ENCODE measurements at regions of chr17 and their contacts with region 1.

Region 1: GRCh38 chr17:7745748-7746470 is 28.4 kb downstream of the DNAH2 start:
- DNase-seq: peak; percentile 23
- H3K4me3 ChIP-seq: no peak overlapping the region
- CTCF ChIP-seq: no peak

Region 2: DNA sequence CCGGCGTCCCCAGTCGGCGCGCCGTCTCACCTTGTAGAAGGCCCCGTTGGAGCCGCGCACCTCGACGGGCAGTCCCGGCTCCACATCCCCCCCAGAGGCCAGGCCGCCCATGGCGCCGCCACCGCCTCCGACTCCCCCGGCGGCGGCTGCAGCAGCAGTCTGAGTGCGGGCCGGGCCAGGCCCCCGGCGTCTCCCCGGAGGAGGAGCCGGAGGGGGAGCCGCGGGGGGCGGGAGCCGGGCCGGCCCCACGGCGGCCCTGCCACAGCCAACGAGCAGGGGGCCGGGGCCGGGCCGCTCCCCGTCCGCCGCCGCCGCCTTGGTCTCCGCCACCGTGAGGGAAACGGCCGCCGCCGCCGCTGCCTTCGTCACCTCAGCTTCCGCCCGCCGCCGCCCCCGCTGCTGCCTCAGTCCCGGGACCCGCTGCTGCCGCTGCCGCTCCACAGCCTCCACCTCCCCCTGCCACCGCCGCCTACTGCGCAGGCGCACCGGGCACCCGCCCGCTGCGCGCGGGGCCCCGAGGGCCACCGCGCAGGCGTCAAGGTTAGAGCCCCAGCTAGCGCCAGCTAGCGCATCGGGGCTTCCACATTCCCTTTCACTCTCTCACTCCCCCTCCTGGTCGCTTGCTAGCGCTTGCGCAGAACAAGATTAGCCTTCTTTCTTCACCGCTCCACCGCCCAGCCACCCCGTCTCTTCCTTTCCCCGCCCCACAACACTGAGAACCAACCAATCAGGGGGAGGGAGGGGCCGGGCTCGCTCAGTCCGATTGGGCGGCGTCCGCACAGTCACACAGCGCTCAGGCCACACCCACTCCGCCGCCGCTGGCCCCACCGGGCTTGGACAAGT is 131.3 kb before region 1 on chr17 and contains the start of gene FXR2:
- CTCF ChIA-PET with region 1: no interaction called
- POLR2A ChIA-PET with region 1: no interaction called
- DNase-seq: peak; percentile 99
- H3K4me3 ChIP-seq: peak within 1 kb of the TSS; percentile 87
- CTCF ChIP-seq: peak; percentile 74

Region 3: GRCh38 chr17:7729816-7730215 is 16.1 kb before region 1 on chr17:
- CTCF ChIA-PET with region 1: interaction called, 19 read pairs
- POLR2A ChIA-PET with region 1: no interaction called
- DNase-seq: no peak
- H3K4me3 ChIP-seq: no peak overlapping the region
- CTCF ChIP-seq: no peak

Region 4: DNA sequence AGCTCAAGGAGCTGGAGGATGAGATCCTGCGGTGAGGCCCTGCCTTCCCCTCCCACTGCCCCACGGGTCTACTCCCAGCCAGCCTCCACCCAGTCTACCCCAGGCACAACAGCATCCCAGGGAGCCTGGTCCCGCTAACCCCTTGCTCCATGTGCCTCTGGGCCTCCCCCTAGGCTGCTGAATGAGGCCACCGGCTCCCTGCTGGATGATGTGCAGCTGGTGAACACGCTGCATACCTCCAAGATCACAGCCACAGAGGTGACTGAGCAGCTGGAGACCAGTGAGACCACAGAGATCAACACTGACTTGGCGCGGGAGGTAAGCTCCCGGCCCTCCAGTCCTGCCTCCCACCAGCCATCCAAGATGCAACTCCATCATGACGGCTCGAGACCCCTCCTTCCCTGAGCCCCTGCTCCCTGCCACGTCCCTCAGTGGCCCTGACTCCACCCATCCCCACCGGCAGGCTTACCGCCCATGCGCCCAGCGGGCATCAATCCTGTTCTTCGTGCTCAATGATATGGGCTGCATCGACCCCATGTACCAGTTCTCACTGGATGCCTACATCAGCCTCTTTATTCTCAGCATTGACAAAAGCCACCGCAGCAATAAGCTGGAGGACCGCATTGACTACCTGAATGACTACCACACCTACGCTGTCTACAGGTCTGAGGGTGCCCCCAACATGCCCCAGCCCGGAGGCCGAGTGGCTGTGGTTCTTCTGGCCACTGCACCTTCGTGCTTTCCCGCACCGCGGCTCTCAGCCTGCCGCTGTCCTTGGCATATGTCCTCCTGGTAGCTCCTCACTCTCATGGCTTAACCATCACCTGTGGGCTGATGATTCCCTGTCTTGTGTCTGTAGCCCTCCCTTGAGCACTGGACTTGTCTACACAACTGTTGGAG is 73.1 kb after region 1 on chr17:
- CTCF ChIA-PET with region 1: interaction called, 13 read pairs
- POLR2A ChIA-PET with region 1: no interaction called
- DNase-seq: no peak
- H3K4me3 ChIP-seq: no peak overlapping the region
- CTCF ChIP-seq: no peak

Region 5: GRCh38 chr17:7844292-7845154 is 98.6 kb after region 1 on chr17:
- CTCF ChIA-PET with region 1: interaction called, 36 read pairs
- POLR2A ChIA-PET with region 1: interaction called, 3 read pairs
- DNase-seq: no peak
- H3K4me3 ChIP-seq: peak overlapping the region; percentile 73
- CTCF ChIP-seq: no peak

Region 6: DNA sequence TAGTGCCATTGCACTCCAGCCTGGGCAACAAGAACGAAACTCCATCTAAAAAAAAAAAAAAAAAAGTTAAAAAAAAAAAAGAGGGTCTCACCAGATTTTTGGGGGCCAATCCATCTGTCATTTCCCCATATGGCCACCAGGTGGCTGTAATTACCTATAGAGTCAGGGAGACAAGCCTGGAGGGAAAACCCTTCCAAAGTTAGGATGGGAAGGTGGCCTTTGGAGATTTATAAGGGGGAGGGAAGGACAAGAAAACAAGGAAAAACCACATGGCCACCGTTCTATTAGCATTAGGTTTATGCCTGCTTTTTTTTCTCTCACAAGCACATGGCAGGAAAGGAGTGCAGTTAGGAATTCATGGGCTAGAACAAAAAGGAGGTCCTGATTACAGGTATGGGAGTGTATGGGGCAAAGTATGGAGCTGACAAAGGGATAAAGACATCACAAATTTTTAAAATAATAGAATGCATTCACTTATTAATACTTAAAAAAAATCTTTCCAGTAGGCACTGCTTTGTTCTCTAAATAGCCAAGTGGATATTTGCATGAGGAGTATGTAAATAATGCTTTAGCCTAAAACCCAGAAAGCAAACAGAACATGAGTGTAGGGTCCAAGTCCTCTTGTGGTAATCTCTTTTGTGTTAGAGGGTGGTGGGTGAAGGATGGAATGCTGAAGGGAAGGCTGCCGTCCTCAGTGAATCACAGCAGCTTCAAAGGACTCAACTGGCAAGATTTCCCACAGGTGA is 117.0 kb after region 1 on chr17:
- CTCF ChIA-PET with region 1: interaction called, 14 read pairs
- POLR2A ChIA-PET with region 1: no interaction called
- DNase-seq: no peak
- H3K4me3 ChIP-seq: no peak overlapping the region
- CTCF ChIP-seq: peak; percentile 59

Region 7: DNA sequence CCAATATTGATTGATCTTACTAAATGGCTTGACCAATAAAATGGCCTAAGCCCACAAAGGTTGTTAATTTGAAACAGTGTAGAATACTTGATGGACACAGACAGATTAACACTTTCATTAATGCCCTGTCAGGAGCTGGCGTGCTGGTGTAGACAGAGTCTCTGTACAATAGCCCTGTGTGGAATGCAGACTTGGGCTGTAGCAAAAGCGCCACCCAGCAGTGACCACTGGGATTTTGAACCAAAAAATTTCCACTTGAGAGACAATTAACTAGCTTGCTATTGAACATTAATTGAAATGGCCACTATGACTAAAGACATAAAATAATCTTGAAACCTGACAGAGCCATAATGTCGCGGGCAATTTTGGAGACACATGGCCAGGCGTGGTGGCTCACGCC is 236.8 kb after region 1 on chr17:
- CTCF ChIA-PET with region 1: interaction called, 43 read pairs
- POLR2A ChIA-PET with region 1: no interaction called
- DNase-seq: no peak
- H3K4me3 ChIP-seq: no peak overlapping the region
- CTCF ChIP-seq: peak; percentile 26